HCT116 (cell line): ENCODE measurements at regions of chr1 and their contacts with region 1.

Region 1: DNA sequence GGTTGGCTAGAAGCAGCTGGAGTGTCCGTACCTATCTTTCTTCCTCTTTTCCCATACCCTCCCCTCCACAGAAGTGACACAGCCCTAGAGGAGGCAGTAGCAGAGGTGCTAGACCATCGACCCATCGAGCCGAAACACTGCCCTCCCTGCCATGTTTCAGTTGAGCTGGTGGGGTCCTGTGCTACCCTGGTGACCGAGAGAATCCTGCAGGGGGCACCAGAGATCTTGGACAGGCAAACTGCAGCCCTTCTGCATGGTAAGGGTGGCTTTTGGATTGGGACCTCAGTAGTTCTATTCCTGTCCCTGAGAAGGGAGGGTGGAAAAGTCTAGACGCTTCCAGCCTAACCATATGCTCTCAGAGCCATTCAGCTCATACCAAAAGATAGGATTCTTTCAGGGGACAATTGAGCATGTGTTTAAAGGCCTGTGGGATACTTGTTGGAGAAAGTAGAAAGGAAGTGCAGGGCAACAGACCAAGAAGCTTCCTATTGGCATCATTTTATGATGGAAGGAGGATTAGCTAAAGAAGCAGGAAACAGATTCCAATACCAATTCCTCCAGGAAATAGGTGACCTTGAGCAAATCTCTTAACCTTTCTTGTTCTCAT is 11.7 kb upstream of the BNIPL start:
- DNase-seq: peak; percentile 46
- ATAC-seq: peak; percentile 99
- H3K4me3 ChIP-seq: no peak overlapping the region
- H3K27ac ChIP-seq: no peak overlapping the region
- H3K4me1 ChIP-seq: no peaks in the 10 kb centered on the region
- H3K27me3 ChIP-seq: no peaks in the 10 kb centered on the region
- CTCF ChIP-seq: peak; percentile 67 to 75 (median 74)
- POLR2A ChIP-seq: no peak
- RAD21 ChIP-seq: peak; percentile 81

Region 2: GRCh38 chr1:151012684-151013471 is 11.8 kb before region 1 on chr1:
- CTCF ChIA-PET with region 1: no interaction called
- POLR2A ChIA-PET with region 1: no interaction called
- RAD21 ChIA-PET with region 1: no interaction called
- intact Hi-C with region 1: no loop called
- DNase-seq: no peak
- ATAC-seq: no peak
- H3K4me3 ChIP-seq: no peak overlapping the region
- H3K27ac ChIP-seq: no peak overlapping the region
- H3K4me1 ChIP-seq: peaks cover 4 to 16% of the 10 kb centered on the region in 2 experiments; a peak in 3 of 4 replicates
- H3K27me3 ChIP-seq: no peaks in the 10 kb centered on the region
- CTCF ChIP-seq: no peak
- POLR2A ChIP-seq: no peak
- RAD21 ChIP-seq: no peak

Region 3: GRCh38 chr1:151059078-151059907 is 34.6 kb after region 1 on chr1 and contains the start of gene CDC42SE1:
- CTCF ChIA-PET with region 1: no interaction called
- POLR2A ChIA-PET with region 1: no interaction called
- RAD21 ChIA-PET with region 1: no interaction called
- intact Hi-C with region 1: loop called (anchors 5 kb)
- DNase-seq: peak; percentile 51
- ATAC-seq: peak; percentile 94
- H3K4me3 ChIP-seq: peak within 1 kb of the TSS; percentile 70 to 96
- H3K27ac ChIP-seq: peak within 1 kb of the TSS; percentile 90
- H3K4me1 ChIP-seq: peaks cover 18 to 41% of the 10 kb centered on the region in 2 experiments
- H3K27me3 ChIP-seq: no peaks in the 10 kb centered on the region
- CTCF ChIP-seq: peak in 2 of 3 experiments; percentile 70 to 79; a peak in 5 of 6 replicates
- POLR2A ChIP-seq: peak; percentile 85
- RAD21 ChIP-seq: peak; percentile 35; the same call in 1 of the 2 replicates
- total RNA-seq, gene CDC42SE1: 50.5 TPM

Region 4: DNA sequence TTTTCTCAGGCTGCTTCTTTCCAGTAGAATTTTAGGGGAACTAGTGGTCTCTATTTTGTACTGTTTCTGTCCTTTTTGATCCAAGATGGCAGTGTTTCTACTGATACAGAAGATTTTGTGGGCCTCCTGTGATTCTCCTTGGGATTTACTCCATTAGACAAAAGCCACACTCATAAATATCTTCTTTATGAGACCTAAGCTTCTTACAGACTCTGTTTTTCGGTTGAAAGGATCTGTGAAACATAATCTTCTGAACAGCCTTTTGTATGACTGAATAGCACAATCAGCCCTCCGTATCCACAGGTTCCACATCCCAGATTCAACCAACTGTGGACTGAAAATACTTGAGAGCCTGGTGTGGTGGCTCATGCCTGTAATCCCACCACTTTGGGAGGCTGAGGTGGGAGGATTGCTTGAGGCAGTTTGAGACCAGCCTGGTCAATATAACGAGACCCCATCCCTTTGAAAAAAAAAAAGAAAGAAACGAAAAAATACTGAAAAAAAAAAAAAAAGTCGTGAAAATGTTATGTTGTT is 219.1 kb after region 1 on chr1:
- CTCF ChIA-PET with region 1: no interaction called
- POLR2A ChIA-PET with region 1: no interaction called
- RAD21 ChIA-PET with region 1: no interaction called
- intact Hi-C with region 1: loop called (anchors 10 kb)
- DNase-seq: no peak
- ATAC-seq: no peak
- H3K4me3 ChIP-seq: no peak overlapping the region
- H3K27ac ChIP-seq: no peak overlapping the region
- H3K4me1 ChIP-seq: no peaks in the 10 kb centered on the region
- H3K27me3 ChIP-seq: no peaks in the 10 kb centered on the region
- CTCF ChIP-seq: no peak
- POLR2A ChIP-seq: no peak
- RAD21 ChIP-seq: no peak